ENCODE measurements at regions of chr9 and their contacts with region 1.

Region 1: DNA sequence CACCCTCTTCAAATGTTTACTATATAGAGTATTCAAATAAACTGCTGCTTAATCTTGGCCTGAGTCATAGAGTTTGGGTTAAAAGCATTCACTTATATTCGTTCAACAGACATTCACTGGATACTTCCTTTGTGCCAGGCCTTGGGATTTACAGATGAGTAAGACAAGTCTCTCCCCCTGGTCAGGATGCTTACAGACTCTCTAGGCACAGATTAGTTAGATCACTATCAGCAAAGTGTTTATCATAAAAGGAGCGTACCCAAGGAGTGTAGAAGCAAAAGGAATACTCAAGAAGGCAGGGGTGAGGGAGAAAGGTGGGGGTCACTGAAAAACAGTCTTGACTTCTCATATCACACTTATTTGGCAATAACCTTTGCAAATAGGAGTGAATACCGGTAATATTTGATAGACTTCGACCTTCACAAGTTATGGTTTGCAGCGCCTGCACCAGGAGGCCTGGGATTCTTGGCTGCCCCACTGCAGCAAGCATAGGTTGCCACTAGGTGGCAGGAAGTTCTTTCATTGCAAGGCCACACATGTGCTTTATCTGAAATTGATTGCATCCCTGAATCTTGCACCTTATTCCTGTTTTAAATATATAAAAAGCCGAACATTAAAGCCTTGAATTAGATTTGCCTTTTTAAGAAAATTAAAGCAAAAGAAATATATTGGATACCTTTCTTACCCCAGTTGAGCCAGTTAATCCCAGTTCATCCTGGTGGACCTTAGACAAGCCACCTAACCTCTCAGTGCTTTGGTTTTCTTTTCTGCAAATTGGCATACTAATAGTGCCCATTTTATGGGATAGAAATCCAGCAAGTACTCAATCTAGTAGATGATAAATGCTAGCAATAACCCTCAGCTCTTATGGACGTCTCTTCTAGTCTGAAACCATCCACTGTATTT is 6.5 kb upstream of the TRMT10B start:
- DNase-seq: peak; percentile 86
- ATAC-seq: peak; percentile 93
- H3K4me3 ChIP-seq: no peak overlapping the region
- H3K27ac ChIP-seq: no peak overlapping the region
- H3K4me1 ChIP-seq: peaks cover 8% of the 10 kb centered on the region
- H3K27me3 ChIP-seq: peaks cover 21% of the 10 kb centered on the region
- CTCF ChIP-seq: peak; percentile 79
- POLR2A ChIP-seq: no peak
- RAD21 ChIP-seq: peak; percentile 81

Region 2: DNA sequence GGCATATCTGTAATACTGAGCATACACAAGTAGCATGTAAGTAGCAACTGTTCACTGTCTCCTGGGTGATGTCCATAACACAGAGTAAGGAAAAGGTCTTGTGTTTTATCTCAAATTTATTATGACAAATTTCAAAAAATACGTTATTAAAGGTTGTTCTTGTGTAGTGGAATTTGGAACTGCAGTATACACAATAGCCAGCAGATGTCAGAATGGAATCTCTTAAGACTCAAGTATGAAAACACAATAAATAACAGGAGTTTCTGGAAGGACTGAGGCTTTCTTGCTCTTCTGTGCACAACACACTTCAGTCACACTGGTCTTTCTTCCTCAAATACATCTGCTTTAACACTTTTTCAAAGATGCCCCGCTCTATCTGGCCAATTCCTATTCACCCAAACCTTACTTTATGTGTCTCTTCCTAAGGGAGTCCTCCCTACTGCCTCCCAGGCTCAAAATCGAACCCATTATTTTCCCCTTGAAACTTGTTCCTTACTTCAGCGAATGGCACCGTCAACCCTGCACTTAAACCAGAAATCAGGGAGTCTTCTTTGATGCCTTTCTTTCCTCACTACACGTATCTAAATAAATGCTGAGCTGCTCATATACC is 164.4 kb before region 1 on chr9:
- CTCF ChIA-PET with region 1: no interaction called
- POLR2A ChIA-PET with region 1: no interaction called
- dilution Hi-C with region 1: no loop called
- in situ Hi-C with region 1: no loop called
- intact Hi-C with region 1: loop called (anchors 5 kb)
- DNase-seq: peak; percentile 86
- ATAC-seq: peak; percentile 93
- H3K4me3 ChIP-seq: no peak overlapping the region
- H3K27ac ChIP-seq: no peak overlapping the region
- H3K4me1 ChIP-seq: no peaks in the 10 kb centered on the region
- H3K27me3 ChIP-seq: no peaks in the 10 kb centered on the region
- CTCF ChIP-seq: peak; percentile 75
- POLR2A ChIP-seq: no peak
- RAD21 ChIP-seq: peak; percentile 70

Region 3: DNA sequence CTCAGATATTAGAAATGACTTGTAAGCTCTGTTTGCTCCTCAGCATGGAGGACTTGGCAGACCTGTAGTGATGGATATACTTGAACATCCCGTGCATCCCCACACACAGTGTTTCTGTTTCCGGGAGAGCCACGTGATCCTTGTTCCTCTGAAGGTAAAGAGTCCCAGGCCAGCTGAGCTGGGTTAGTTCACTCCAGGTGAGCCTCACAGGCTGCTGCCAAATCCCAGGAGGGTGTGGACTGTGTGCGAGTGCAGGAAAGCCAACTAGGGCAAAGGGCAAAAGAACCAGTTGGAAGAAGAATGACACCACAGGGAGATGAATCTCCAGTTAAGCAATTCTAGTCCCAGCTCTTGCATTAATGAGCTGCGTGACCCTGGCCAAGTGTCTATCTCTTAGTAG is 144.3 kb before region 1 on chr9:
- CTCF ChIA-PET with region 1: no interaction called
- POLR2A ChIA-PET with region 1: no interaction called
- dilution Hi-C with region 1: no loop called
- in situ Hi-C with region 1: no loop called
- intact Hi-C with region 1: no loop called
- DNase-seq: no peak
- ATAC-seq: no peak
- H3K4me3 ChIP-seq: no peak overlapping the region
- H3K27ac ChIP-seq: no peak overlapping the region
- H3K4me1 ChIP-seq: no peaks in the 10 kb centered on the region
- H3K27me3 ChIP-seq: peaks cover 27% of the 10 kb centered on the region
- CTCF ChIP-seq: no peak
- POLR2A ChIP-seq: no peak
- RAD21 ChIP-seq: no peak

Region 4: DNA sequence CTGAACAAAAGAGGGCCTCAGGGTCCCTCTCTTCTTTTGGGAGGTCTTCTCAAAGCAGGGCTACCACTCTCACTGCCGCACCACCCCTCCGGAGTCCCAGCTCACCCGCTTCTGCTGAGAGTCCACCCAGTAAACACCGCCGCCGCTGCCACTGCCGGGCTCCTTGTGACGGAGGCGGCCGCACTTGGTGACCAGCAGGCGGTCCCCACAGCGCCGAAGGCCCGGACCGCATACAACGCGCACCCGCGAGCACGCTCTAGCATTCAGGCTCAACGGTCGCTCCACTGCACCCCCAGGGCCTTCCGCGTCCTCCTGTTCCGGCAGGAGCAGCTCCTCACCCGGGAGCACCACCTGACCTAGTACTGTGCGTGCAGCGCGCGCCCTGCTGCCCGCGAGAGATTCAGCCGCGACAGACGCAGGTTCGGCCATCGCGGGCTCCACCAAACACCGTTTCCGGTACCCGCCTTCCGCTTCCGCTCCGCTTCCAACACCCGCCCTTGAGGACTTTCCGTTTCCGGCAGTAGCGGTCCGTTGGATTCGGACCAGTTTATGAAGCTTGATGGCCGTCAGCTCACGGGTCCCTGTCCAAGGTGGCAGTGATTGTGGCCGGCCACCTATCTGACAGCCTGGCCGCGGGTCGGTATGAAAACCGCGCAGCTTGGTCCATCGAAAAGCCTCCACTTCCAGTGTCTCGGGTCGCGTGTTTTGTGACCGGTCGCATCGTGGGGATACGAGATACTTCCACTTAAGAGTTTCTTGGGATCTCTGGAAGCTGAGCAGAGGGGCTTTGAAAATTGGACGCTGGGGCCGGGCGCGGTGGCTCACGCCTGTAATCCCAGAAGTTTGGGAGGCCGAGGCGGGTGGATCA is 37.7 kb after region 1 on chr9 and contains the start of gene EXOSC3:
- CTCF ChIA-PET with region 1: no interaction called
- POLR2A ChIA-PET with region 1: no interaction called
- dilution Hi-C with region 1: no loop called
- in situ Hi-C with region 1: no loop called
- intact Hi-C with region 1: loop called (anchors 2 kb)
- DNase-seq: peak; percentile 90
- ATAC-seq: peak; percentile 90
- H3K4me3 ChIP-seq: peak within 1 kb of the TSS; percentile 94
- H3K27ac ChIP-seq: peak within 1 kb of the TSS; percentile 95
- H3K4me1 ChIP-seq: peaks cover 3% of the 10 kb centered on the region; the same call in 1 of the 2 replicates
- H3K27me3 ChIP-seq: no peaks in the 10 kb centered on the region
- CTCF ChIP-seq: 0 out of 2 replicates have a peak, but pooled peaks have one; percentile 4
- POLR2A ChIP-seq: peak; percentile 68; the same call in 1 of the 2 replicates
- RAD21 ChIP-seq: peak; percentile 9
- total RNA-seq, gene EXOSC3: 27.1 and 58.6 TPM in 2 replicates

Region 5: GRCh38 chr9:37903647-37904444 is 156.7 kb after region 1 on chr9 and contains the start of gene SLC25A51:
- CTCF ChIA-PET with region 1: no interaction called
- POLR2A ChIA-PET with region 1: interaction called, 3 read pairs
- dilution Hi-C with region 1: no loop called
- in situ Hi-C with region 1: no loop called
- intact Hi-C with region 1: loop called (anchors 2 kb)
- DNase-seq: peak; percentile 88
- ATAC-seq: peak; percentile 85
- H3K4me3 ChIP-seq: peak within 1 kb of the TSS; percentile 78
- H3K27ac ChIP-seq: peak within 1 kb of the TSS; percentile 79
- H3K4me1 ChIP-seq: peaks cover 12% of the 10 kb centered on the region
- H3K27me3 ChIP-seq: no peaks in the 10 kb centered on the region
- CTCF ChIP-seq: peak; percentile 98
- POLR2A ChIP-seq: no peak; the same call in 1 of the 2 replicates
- RAD21 ChIP-seq: peak; percentile 72
- total RNA-seq, gene SLC25A51: 63.0 and 81.6 TPM in 2 replicates

Region 6: GRCh38 chr9:38408719-38409118 is 661.6 kb after region 1 on chr9:
- CTCF ChIA-PET with region 1: no interaction called
- POLR2A ChIA-PET with region 1: no interaction called
- dilution Hi-C with region 1: no loop called
- in situ Hi-C with region 1: no loop called
- intact Hi-C with region 1: loop called (anchors 10 kb)
- DNase-seq: no peak
- ATAC-seq: no peak
- H3K4me3 ChIP-seq: no peak overlapping the region
- H3K27ac ChIP-seq: no peak overlapping the region
- H3K4me1 ChIP-seq: no peaks in the 10 kb centered on the region
- H3K27me3 ChIP-seq: peaks cover 84% of the 10 kb centered on the region
- CTCF ChIP-seq: no peak
- POLR2A ChIP-seq: no peak
- RAD21 ChIP-seq: no peak

Measured in IMR-90 (cell line).